ENCODE measurements at regions of chr12 and their contacts with region 1.

Region 1: DNA sequence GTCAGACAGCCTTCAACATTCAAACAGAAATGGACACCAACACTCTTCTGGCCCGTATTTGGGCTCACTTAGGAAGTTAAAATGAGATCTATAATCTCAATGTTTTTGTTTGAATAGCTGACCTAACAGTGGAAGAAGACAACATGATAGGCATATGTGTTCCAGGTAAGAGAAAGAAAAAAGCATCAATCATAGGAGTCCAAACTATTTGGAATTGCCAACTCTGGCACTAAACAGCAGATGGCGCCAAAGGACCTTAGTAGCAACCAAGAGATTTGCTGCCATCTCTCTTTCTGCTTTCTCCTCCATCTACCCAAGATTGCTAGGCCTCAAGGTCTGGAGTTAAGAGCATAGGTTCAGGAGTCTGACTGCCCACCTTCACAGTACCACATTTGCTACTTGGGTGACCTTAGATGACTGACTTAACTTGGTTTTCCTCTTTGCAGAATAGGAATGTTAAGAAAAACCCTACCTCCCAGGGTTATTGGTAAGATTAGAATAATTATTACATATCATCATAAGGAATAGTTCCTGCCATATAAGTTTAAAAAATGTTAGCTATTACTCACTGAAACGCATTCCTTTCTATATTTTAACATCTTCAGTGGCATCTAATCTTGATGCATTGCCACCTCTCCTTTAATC is 30.2 kb downstream of the PEX5 start:
- DNase-seq: peak; percentile 42
- H3K4me3 Mint-ChIP-seq: no peak overlapping the region
- H3K27ac Mint-ChIP-seq: no peak overlapping the region
- H3K4me1 Mint-ChIP-seq: no peaks in the 10 kb centered on the region
- H3K27me3 Mint-ChIP-seq: peaks cover 3% of the 10 kb centered on the region

Region 2: GRCh38 chr12:7361265-7361664 is 141.5 kb after region 1 on chr12:
- intact Hi-C with region 1: loop called (anchors 5 kb)
- DNase-seq: no peak
- H3K4me3 Mint-ChIP-seq: no peak overlapping the region
- H3K27ac Mint-ChIP-seq: no peak overlapping the region
- H3K4me1 Mint-ChIP-seq: no peaks in the 10 kb centered on the region
- H3K27me3 Mint-ChIP-seq: no peaks in the 10 kb centered on the region

Region 3: DNA sequence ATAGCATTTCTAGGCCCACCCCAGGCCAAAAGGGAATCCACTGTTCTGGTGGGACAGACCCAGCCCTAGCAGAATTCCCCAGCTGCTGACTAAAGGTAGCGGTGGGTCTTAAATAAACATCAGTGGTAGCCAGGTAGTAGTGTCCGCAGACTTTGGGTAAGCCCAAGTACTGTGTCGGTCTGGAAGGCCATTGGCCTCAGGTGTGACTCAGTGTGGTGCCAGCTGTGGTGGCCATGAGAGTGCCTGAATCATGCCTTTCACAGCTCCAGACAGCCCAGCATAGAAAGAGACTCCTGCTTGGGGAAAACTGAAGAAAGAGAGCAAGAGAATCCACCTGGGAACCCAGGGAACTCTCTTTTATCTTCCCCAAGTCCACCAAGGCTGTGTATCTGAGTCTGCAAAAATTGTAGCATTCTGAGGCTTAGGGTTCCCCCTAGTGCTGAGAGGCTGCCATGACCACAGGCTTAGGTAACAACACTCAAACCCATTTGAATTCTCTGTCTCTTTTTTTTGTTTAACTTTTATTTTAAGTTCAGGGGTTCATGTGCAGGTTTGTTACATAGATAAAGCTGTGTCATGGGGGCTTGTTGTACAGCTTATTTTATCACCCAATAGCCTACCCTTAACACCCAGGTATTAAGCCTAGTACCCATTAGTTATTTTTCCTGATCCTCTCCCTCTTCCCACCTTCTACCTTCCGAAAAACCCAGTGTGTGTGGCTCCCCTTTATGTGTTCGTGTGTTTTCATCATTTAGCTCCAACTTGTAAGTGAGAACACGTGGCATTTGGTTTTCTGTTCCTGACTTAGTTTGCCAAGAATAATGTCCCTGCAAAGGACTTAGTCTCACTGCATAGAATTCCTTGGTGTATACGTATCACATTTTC is 240.9 kb after region 1 on chr12:
- intact Hi-C with region 1: loop called (anchors 1 kb)
- DNase-seq: peak; percentile 11
- H3K4me3 Mint-ChIP-seq: no peak overlapping the region
- H3K27ac Mint-ChIP-seq: no peak overlapping the region
- H3K4me1 Mint-ChIP-seq: no peaks in the 10 kb centered on the region
- H3K27me3 Mint-ChIP-seq: peaks cover 5% of the 10 kb centered on the region

Region 4: DNA sequence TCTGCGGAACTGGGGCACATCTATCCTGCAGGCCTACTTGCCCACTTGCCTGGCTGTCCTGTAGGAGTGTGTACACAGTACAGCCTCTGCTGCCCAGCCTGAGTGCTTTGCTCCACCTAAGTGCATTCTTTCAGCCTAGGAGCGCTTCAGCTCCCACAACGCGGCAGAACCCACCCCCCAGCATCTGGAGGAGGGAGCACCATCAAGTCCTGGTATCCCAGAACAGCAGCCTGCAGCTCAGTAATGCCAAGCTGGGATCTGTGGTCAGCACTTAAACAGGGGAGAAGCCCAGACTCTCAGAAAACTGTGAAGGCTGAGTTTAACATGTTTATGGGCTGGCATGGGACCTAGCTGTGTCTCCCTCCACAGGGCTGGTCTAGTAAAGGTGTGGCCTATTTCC is 363.9 kb after region 1 on chr12:
- intact Hi-C with region 1: loop called (anchors 5 kb)
- DNase-seq: no peak
- H3K4me3 Mint-ChIP-seq: no peak overlapping the region
- H3K27ac Mint-ChIP-seq: no peak overlapping the region
- H3K4me1 Mint-ChIP-seq: peaks cover 7% of the 10 kb centered on the region
- H3K27me3 Mint-ChIP-seq: peaks cover 6% of the 10 kb centered on the region

Region 5: DNA sequence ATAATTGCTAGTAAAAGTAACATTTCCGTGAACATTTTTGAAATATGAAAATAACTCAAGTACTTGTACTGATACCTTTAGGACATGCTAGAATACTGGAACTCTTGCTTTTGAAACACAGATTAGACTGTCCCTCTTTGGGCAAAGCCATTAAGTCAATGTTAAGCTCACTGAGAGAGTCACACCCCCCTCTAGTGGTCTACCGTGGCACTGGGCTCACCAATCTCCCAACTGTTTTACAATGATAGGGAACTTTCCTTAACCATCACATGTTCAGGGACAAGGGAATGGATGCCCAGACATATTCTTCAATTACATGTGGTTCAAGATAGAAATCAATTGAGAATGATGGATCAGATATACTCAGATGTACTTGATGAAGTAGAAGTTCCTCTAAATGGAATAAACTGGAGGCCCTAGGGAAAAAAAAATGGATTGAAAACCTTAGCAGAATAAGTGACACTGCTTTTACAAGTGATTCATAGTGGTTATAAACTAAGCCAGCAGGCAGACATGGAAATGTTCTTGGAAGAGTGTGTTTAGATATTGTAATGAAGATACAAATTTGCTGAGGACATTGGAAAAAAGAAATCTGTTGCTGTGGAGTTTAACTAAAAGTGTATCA is 587.3 kb after region 1 on chr12:
- intact Hi-C with region 1: loop called (anchors 1 kb)
- DNase-seq: peak; percentile 18
- H3K4me3 Mint-ChIP-seq: no peak overlapping the region
- H3K27ac Mint-ChIP-seq: no peak overlapping the region
- H3K4me1 Mint-ChIP-seq: no peaks in the 10 kb centered on the region
- H3K27me3 Mint-ChIP-seq: peaks cover 4% of the 10 kb centered on the region